CD4-positive, alpha-beta T cell (primary cell): ENCODE measurements at regions of chr19 and their contacts with region 1.

Region 1: DNA sequence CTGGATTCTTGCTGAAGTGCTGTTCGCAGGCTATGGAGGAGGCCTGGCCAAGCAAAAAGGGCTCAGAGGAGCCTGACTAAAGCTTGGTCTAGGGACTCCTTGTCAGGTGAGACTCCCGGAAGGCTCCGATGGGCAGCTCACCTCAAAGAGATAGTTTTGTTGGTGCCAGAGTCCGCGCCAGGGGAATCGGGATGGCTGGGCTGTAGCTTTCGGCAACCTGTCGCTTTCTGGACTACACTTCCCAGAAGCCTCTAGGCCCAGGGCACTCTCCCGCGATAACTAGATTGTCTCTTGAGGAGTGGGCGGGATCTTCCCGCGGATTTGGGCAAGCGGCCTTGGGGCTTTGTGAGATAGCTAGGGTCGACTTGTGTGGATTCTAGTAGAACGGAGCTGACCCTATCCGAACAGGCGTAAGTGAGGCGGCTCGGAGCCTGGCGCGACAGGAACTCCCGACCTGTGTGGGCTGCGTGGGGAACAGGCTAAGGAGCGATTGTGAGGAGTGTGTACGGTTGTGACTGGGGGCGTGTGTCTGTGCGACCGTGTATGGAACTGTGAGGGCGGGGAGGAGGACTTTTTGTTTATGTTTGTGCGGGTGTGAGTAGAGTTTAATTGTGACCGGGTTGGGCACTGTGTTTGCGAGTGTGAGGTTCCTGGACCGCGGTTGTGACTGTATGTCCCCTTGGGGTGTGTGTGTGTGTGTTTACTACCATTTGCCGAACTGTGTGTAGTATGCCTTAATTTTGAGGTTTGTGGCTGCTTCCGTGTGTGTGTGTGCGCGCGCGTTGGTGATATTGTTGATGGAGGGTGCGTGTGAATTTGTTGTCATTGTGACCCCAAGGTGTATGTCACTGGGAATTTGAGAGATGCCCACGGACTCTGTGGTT is at the start of gene ZNF345:
- DNase-seq: peak; percentile 69 to 94 (median 79)
- ATAC-seq: peak; percentile 81
- H3K4me3 ChIP-seq: peak within 1 kb of the TSS; percentile 83
- H3K4me3 Mint-ChIP-seq: no peak within 1 kb of the TSS
- H3K27ac ChIP-seq: peak within 1 kb of the TSS; percentile 71 to 86
- H3K27ac Mint-ChIP-seq: no peak within 1 kb of the TSS
- H3K4me1 ChIP-seq: peaks cover 29% of the 10 kb centered on the region
- H3K4me1 Mint-ChIP-seq: peaks cover 15% of the 10 kb centered on the region
- H3K27me3 ChIP-seq: no peaks in the 10 kb centered on the region
- H3K27me3 Mint-ChIP-seq: no peaks in the 10 kb centered on the region
- CTCF ChIP-seq: no peak
- total RNA-seq, gene ZNF345: 5.9 to 7.1 TPM

Region 2: DNA sequence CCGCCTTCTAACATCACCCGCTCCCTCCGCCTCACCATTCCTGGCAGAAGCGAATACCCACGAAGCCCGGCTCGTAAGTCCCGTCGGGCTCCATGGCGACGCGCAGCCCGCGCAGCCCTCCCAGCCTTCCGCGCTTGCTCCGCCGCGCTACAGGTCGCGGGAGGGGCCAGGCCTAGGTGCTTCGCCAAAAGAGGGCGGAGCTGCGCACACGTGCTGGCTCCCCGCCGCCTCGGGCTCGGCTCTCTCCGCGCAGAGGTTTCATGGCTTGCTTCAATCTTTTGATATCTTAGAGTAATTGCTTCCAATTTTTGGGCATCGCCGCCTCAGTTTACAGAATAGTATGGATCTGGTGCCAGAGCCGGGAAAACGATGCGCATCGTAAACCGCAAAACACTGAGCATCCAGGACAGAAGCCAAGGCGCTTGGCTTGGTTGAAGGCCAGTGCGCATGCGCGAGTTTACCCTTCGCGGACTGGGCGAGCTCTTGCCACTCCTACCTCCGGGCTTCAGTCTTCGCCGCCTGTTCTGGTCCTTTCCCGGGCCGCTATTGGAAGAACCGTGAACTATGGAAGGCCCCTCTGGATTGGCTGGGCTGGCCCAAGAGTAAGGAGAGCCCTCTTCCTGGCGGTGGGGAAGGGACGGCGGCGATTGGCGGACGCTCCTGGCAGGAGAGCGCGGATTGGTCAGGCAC is 735.9 kb before region 1 on chr19 and contains the start of gene POLR2I:
- CTCF ChIA-PET with region 1: interaction called, 4 read pairs
- POLR2A ChIA-PET with region 1: interaction called, 4 read pairs
- intact Hi-C with region 1: loop called in 1 of 2 experiments (anchors 10 kb)
- DNase-seq: peak; percentile 96 to 100 (median 99)
- ATAC-seq: peak; percentile 86
- H3K4me3 ChIP-seq: peak within 1 kb of the TSS; percentile 97
- H3K4me3 Mint-ChIP-seq: peak within 1 kb of the TSS; percentile 94
- H3K27ac ChIP-seq: peak within 1 kb of the TSS; percentile 87 to 92
- H3K27ac Mint-ChIP-seq: peak within 1 kb of the TSS; percentile 94
- H3K4me1 ChIP-seq: peaks cover 40% of the 10 kb centered on the region
- H3K4me1 Mint-ChIP-seq: peaks cover 42% of the 10 kb centered on the region
- H3K27me3 ChIP-seq: no peaks in the 10 kb centered on the region
- H3K27me3 Mint-ChIP-seq: no peaks in the 10 kb centered on the region
- CTCF ChIP-seq: no peak
- total RNA-seq, gene POLR2I: 29.2 to 31.1 TPM

Region 3: GRCh38 chr19:36528194-36528920 is 322.4 kb before region 1 on chr19 and contains the start of gene ZNF260:
- CTCF ChIA-PET with region 1: no interaction called
- POLR2A ChIA-PET with region 1: interaction called, 10 read pairs
- intact Hi-C with region 1: no loop called
- DNase-seq: peak; percentile 82 to 97 (median 88)
- ATAC-seq: peak; percentile 87
- H3K4me3 ChIP-seq: peak within 1 kb of the TSS; percentile 80
- H3K4me3 Mint-ChIP-seq: peak within 1 kb of the TSS; percentile 97
- H3K27ac ChIP-seq: peak within 1 kb of the TSS; percentile 72 to 90
- H3K27ac Mint-ChIP-seq: peak within 1 kb of the TSS; percentile 93
- H3K4me1 ChIP-seq: peaks cover 19% of the 10 kb centered on the region
- H3K4me1 Mint-ChIP-seq: peaks cover 29% of the 10 kb centered on the region
- H3K27me3 ChIP-seq: no peaks in the 10 kb centered on the region
- H3K27me3 Mint-ChIP-seq: no peaks in the 10 kb centered on the region
- CTCF ChIP-seq: no peak
- total RNA-seq, gene ZNF260: 2.0 to 5.0 TPM

Region 4: GRCh38 chr19:36627057-36627456 is 223.7 kb before region 1 on chr19:
- CTCF ChIA-PET with region 1: no interaction called
- POLR2A ChIA-PET with region 1: no interaction called
- intact Hi-C with region 1: no loop called
- DNase-seq: no peak
- ATAC-seq: no peak
- H3K4me3 ChIP-seq: no peak overlapping the region
- H3K4me3 Mint-ChIP-seq: no peak overlapping the region
- H3K27ac ChIP-seq: no peak overlapping the region
- H3K27ac Mint-ChIP-seq: no peak overlapping the region
- H3K4me1 ChIP-seq: no peaks in the 10 kb centered on the region
- H3K4me1 Mint-ChIP-seq: no peaks in the 10 kb centered on the region
- H3K27me3 ChIP-seq: no peaks in the 10 kb centered on the region
- H3K27me3 Mint-ChIP-seq: no peaks in the 10 kb centered on the region
- CTCF ChIP-seq: no peak

Region 5: DNA sequence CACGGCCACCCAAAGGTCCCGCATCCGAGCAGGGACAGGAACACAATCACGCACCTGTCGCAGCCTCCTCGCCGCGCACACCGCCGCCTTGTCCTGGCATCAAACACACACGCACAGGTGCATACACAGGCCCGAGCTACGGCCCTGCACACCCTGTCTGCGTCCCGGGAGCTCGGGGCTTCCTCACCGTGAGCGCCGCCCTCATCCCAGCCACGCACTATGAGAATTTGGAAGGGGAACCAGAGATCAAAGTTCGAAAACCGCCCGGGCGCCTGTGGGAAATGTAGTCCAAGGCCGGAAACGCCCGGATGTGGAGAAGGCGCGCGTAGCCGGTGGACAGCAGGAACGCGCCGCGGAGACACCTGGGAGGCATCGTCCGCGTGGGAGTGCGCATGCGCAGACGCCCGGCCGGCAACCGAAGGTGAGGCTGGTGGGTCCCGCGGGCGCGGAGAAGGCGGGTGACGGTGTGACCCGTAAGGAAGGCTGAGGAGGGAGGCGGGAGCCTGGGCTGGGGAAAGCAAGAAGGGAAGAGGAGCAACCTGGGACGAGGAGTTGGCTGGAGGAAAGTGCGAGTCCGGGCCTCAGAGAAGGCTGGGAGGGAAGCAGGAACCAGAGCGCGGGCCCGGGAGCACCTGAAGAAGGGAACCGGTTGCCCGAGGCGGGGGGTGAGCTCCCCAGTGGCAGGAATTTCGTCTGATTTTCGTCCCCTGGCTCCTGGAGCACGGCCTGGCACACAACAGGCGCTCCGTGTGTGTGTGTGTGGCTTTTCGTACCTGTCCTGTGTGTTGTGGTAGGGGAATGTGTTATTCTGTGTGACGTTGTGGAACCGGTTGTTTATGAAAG is 163.4 kb before region 1 on chr19 and contains the start of gene ZNF567:
- CTCF ChIA-PET with region 1: no interaction called
- POLR2A ChIA-PET with region 1: interaction called, 5 read pairs
- intact Hi-C with region 1: loop called in 1 of 2 experiments (anchors 1 kb)
- DNase-seq: peak; percentile 94 to 99 (median 97)
- ATAC-seq: peak; percentile 93
- H3K4me3 ChIP-seq: peak within 1 kb of the TSS; percentile 67
- H3K4me3 Mint-ChIP-seq: peak within 1 kb of the TSS; percentile 99
- H3K27ac ChIP-seq: peak within 1 kb of the TSS; percentile 47 to 56
- H3K27ac Mint-ChIP-seq: peak within 1 kb of the TSS; percentile 97
- H3K4me1 ChIP-seq: peaks cover 23% of the 10 kb centered on the region
- H3K4me1 Mint-ChIP-seq: peaks cover 40% of the 10 kb centered on the region
- H3K27me3 ChIP-seq: no peaks in the 10 kb centered on the region
- H3K27me3 Mint-ChIP-seq: no peaks in the 10 kb centered on the region
- CTCF ChIP-seq: no peak
- total RNA-seq, gene ZNF567: 7.3 to 7.6 TPM

Region 6: DNA sequence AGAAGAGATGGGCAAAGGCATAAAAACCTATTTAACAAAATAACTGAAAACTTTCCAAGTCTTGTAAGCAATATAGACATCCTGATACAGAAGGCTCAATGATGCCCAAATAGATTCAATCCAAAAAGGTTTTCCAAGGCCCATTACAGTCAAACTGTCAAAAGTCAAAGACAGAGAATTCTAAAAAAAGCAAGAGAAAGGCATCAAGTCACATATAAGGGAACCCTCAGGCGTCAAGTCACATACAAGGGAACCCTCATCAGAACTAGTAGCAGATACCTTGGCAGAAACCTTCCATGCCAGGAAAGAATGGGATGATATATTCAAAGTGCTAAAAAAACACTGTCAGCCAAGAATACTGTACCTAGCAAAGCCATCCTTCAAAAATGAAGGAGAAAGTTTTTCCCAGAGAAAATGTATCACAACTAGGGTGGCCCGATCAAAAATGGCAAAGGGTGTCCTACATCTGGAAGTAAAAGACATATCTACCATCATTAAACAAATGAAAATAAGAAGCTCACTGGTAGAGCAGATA is 44.1 kb after region 1 on chr19:
- CTCF ChIA-PET with region 1: no interaction called
- POLR2A ChIA-PET with region 1: no interaction called
- intact Hi-C with region 1: no loop called
- DNase-seq: no peak
- ATAC-seq: no peak
- H3K4me3 ChIP-seq: no peak overlapping the region
- H3K4me3 Mint-ChIP-seq: no peak overlapping the region
- H3K27ac ChIP-seq: no peak overlapping the region
- H3K27ac Mint-ChIP-seq: no peak overlapping the region
- H3K4me1 ChIP-seq: no peaks in the 10 kb centered on the region
- H3K4me1 Mint-ChIP-seq: no peaks in the 10 kb centered on the region
- H3K27me3 ChIP-seq: no peaks in the 10 kb centered on the region
- H3K27me3 Mint-ChIP-seq: no peaks in the 10 kb centered on the region
- CTCF ChIP-seq: no peak

Region 7: GRCh38 chr19:36915992-36916830 is 65.4 kb after region 1 on chr19 and contains the starts of genes ZNF568 and ZNF829:
- CTCF ChIA-PET with region 1: no interaction called
- POLR2A ChIA-PET with region 1: interaction called, 4 read pairs
- intact Hi-C with region 1: loop called (anchors 1 to 2 kb)
- DNase-seq: peak; percentile 83 to 97 (median 90)
- ATAC-seq: peak; percentile 97
- H3K4me3 ChIP-seq: peak within 1 kb of the TSS; percentile 92
- H3K4me3 Mint-ChIP-seq: peak within 1 kb of the TSS; percentile 90
- H3K27ac ChIP-seq: peak within 1 kb of the TSS; percentile 89 to 97
- H3K27ac Mint-ChIP-seq: peak within 1 kb of the TSS; percentile 88
- H3K4me1 ChIP-seq: peaks cover 19% of the 10 kb centered on the region
- H3K4me1 Mint-ChIP-seq: peaks cover 44% of the 10 kb centered on the region
- H3K27me3 ChIP-seq: no peaks in the 10 kb centered on the region
- H3K27me3 Mint-ChIP-seq: no peaks in the 10 kb centered on the region
- CTCF ChIP-seq: peak; percentile 74
- total RNA-seq, gene ZNF568: 3.0 to 4.2 TPM
- total RNA-seq, gene ZNF829: 3.8 to 4.4 TPM

Region 8: GRCh38 chr19:37370880-37371661 is 520.3 kb after region 1 on chr19 and contains the start of gene ZNF527:
- CTCF ChIA-PET with region 1: no interaction called
- POLR2A ChIA-PET with region 1: interaction called, 11 read pairs
- intact Hi-C with region 1: no loop called
- DNase-seq: peak; percentile 93 to 98 (median 96)
- ATAC-seq: peak; percentile 96
- H3K4me3 ChIP-seq: peak within 1 kb of the TSS; percentile 59
- H3K4me3 Mint-ChIP-seq: peak within 1 kb of the TSS; percentile 96
- H3K27ac ChIP-seq: peak within 1 kb of the TSS; percentile 76 to 85
- H3K27ac Mint-ChIP-seq: peak within 1 kb of the TSS; percentile 96
- H3K4me1 ChIP-seq: peaks cover 17% of the 10 kb centered on the region
- H3K4me1 Mint-ChIP-seq: peaks cover 16% of the 10 kb centered on the region
- H3K27me3 ChIP-seq: no peaks in the 10 kb centered on the region
- H3K27me3 Mint-ChIP-seq: no peaks in the 10 kb centered on the region
- CTCF ChIP-seq: no peak
- total RNA-seq, gene ZNF527: 7.8 to 8.4 TPM